Activated CD8-positive, alpha-beta T cell treated with anti-CD3 and anti-CD28 coated beads, Interleukin-2, amount 10 ng/mL, durations not matched to agents 7 days and 5 days (primary cell): ENCODE measurements at regions of chr5 and their contacts with region 1.

Region 1: DNA sequence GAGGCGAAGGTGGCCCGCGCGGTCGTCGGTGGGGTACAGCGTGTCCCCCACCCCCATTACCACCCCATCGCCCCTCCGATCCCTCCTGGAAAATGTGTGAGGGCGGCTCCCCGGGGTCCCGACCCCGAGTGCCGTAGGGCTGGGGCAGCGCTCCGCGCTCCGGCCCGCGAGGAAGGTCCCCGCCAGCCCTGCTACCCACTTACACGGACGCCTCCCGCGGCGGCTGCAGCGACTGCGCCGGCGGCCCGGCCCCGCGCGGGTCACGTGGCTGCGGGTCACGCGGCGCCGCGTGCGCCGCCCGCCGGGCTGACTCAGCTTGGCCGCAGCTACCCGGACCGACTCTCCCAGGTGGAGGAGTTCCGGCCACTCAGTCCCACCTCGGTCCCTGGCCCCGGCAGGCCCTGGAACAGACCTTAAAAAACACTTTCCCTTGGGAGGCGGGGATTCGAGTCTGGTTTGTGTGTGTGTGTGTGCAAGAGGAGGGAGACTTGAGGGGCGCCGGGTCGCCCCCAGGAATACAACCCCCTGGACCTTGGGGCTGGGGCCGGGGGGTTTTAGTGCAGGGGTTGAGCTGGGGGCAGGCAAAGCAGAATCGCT is at the start of gene GNPDA1:
- DNase-seq: peak; percentile 74
- ATAC-seq: peak; percentile 53
- H3K4me3 Mint-ChIP-seq: peak within 1 kb of the TSS; percentile 82
- H3K27ac Mint-ChIP-seq: peak within 1 kb of the TSS; percentile 93
- H3K4me1 Mint-ChIP-seq: peaks cover 85% of the 10 kb centered on the region
- H3K27me3 Mint-ChIP-seq: no peaks in the 10 kb centered on the region
- total RNA-seq, gene GNPDA1: 34.9 to 41.0 TPM

Region 2: GRCh38 chr5:141691867-141692532 is 320.9 kb before region 1 on chr5:
- CTCF ChIA-PET with region 1: interaction called, 21 read pairs
- POLR2A ChIA-PET with region 1: no interaction called
- DNase-seq: peak; percentile 89
- ATAC-seq: peak; percentile 89
- H3K4me3 Mint-ChIP-seq: peak overlapping the region; percentile 71
- H3K27ac Mint-ChIP-seq: peak overlapping the region; percentile 75
- H3K4me1 Mint-ChIP-seq: peaks cover 28% of the 10 kb centered on the region
- H3K27me3 Mint-ChIP-seq: peaks cover 23% of the 10 kb centered on the region

Region 3: GRCh38 chr5:142000703-142001484 is 12.0 kb before region 1 on chr5:
- CTCF ChIA-PET with region 1: interaction called, 126 read pairs
- POLR2A ChIA-PET with region 1: interaction called, 7 read pairs
- DNase-seq: no peak
- ATAC-seq: no peak
- H3K4me3 Mint-ChIP-seq: no peak overlapping the region
- H3K27ac Mint-ChIP-seq: peak overlapping the region; percentile 50
- H3K4me1 Mint-ChIP-seq: peaks cover 31% of the 10 kb centered on the region
- H3K27me3 Mint-ChIP-seq: no peaks in the 10 kb centered on the region

Region 4: GRCh38 chr5:142069606-142070399 is 56.9 kb after region 1 on chr5:
- CTCF ChIA-PET with region 1: interaction called, 13 read pairs
- POLR2A ChIA-PET with region 1: no interaction called
- DNase-seq: no peak
- ATAC-seq: no peak
- H3K4me3 Mint-ChIP-seq: no peak overlapping the region
- H3K27ac Mint-ChIP-seq: no peak overlapping the region
- H3K4me1 Mint-ChIP-seq: peaks cover 12% of the 10 kb centered on the region
- H3K27me3 Mint-ChIP-seq: peaks cover 6% of the 10 kb centered on the region

Region 5: GRCh38 chr5:142108432-142109330 is 95.8 kb after region 1 on chr5 and contains the start of gene NDFIP1:
- CTCF ChIA-PET with region 1: interaction called, 91 read pairs
- POLR2A ChIA-PET with region 1: interaction called, 86 read pairs
- DNase-seq: peak; percentile 87
- ATAC-seq: peak; percentile 90
- H3K4me3 Mint-ChIP-seq: peak within 1 kb of the TSS; percentile 93
- H3K27ac Mint-ChIP-seq: peak within 1 kb of the TSS; percentile 93
- H3K4me1 Mint-ChIP-seq: peaks cover 68% of the 10 kb centered on the region
- H3K27me3 Mint-ChIP-seq: no peaks in the 10 kb centered on the region
- total RNA-seq, gene NDFIP1: 47.2 TPM